RWPE1 (cell line): ENCODE measurements at regions of chr15 and their contacts with region 1.

Region 1: DNA sequence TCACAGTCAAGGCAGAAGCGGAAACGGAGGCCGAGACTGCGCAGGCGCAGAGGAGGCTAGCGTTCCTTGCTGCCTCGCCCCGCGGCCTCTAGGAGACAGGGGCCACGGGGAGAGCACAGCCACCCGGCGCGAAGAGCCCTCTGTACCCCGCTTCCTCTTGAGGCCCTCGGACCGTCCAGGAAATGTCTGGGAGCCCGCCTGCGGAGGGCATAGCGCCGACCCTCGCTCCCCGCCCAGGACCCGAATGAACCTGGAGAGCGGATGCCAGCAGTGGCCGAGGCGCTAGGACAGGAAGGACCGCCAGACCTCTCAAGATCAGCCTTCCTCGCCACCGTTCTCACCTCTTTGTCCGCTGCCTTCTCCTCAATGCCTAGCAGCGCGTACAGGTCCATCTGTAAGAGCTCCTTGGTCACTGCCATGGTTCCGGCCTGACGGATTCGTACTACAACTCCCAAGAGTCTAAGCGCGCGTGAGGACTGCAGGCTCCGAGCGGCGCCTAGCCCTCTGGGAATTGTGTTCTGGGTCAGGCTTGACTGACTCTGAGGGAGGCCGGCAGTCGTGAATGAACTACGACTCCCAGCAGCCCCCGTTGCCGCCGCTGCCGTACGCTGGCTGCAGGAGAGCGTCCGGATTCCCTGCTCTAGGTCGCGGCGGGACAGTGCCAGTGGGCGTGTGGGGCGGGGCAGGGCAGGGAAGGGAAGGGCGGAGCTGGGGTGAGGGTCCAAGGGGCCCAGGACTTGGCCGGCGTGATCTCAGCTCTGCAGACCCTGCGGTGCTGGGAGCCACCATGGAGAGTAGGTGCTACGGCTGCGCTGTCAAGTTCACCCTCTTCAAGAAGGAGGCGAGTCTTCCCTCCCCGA is at the starts of genes DNAJC17 and ZFYVE19:
- DNase-seq: peak; percentile 94
- H3K27ac ChIP-seq: peak within 1 kb of the TSS; percentile 89
- CTCF ChIP-seq: no peak

Region 2: DNA sequence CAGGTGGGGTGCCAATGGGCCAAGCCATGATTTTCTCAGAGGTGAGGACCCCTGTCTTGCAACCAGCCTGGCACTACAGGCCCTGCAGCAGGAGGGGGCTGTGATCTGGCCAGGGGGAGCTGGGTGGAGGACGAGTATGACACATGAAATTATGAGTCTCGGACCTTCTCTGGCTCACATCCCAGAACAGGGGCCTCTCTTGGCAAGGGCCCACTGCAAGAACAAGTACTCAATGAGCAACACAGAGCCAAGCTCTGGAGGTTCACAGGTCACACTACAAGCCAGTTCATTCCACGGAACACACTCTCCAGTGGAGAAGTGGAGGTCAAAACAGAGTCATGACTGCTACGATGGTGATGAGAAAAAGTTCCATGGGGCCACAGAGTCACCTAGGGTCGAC is 270.8 kb before region 1 on chr15:
- CTCF ChIA-PET with region 1: no interaction called
- POLR2A ChIA-PET with region 1: no interaction called
- DNase-seq: no peak
- H3K27ac ChIP-seq: no peak overlapping the region
- CTCF ChIP-seq: no peak

Region 3: DNA sequence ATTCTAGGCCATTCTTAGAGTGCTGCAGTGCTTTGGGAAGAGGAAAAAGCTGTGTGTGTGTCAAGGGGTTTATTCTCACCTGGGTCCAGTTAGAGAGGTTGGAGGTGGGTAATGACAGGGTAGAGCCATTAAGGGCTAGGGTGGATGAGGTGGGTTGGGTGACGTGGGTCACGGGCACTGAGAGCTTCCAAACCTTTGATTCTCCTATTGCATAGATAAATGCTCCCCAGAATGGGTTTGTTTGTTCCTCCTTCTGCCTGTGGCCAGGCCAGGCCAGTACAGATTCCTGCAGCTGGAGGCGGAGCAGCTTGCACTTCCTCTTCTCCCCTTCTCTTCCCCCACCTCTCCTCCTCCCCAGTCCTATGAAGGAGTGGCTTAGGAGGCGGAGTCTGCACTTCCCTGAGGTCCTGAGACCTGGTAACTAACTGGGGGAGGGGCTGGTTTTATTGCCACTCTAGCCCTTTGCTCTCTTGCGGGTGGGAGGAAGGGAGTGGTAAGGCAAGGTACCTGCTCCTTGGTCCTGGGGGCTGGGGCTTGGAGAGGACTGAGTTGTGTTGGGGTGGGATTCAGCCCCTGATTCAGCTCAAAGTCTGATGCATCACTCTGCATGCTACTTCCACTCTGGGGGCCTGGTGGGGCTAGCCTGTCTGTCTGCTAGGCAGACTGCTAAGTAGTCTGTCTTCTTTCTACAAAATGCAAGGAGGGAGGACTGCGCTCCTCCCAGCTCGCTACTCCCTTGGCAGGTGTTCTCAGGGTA is 40.1 kb after region 1 on chr15:
- CTCF ChIA-PET with region 1: no interaction called
- POLR2A ChIA-PET with region 1: interaction called, 10 read pairs
- DNase-seq: peak; percentile 78
- H3K27ac ChIP-seq: peak overlapping the region; percentile 68
- CTCF ChIP-seq: no peak

Region 4: GRCh38 chr15:40873625-40874561 is 66.6 kb after region 1 on chr15 and contains the start of gene RHOV:
- CTCF ChIA-PET with region 1: no interaction called
- POLR2A ChIA-PET with region 1: no interaction called
- DNase-seq: peak; percentile 74
- H3K27ac ChIP-seq: peak within 1 kb of the TSS; percentile 29; the same call in 1 of the 2 replicates
- CTCF ChIP-seq: no peak; the same call in 1 of the 2 replicates